WTC11 (cell line): ENCODE measurements at regions of chr14 and their contacts with region 1.

Region 1: DNA sequence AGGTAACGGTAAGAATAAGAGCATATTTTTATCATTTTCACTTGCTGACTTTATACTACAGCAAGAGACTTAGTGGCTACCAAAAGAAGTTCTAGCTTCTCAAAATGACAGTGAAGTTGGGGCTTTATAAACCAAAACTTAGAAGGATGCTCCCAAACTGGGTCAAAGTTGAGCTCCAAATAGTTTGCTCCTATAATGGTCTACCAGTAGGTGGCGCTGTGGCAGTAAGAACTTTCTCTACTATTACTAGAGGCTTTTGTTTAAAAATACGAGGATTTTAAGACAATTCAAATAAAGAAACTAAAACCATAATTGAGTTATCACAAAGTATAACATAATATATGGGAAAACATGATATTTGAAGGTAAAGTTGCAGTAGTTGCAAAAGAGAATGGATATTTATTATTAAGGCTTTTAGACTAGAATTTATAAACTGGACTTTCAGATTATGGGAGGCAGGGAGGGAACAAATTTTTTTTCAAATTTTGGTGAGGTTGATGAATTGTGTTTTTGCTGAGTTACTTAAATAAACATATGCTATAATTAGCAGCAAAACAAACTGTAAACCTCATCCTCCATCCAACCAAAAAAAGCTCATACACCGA is 75.0 kb downstream of the TGFB3 start:
- DNase-seq: peak; percentile 67
- ATAC-seq: peak; percentile 26; the same call in 1 of the 2 replicates
- H3K4me3 Mint-ChIP-seq: no peak overlapping the region
- H3K27ac Mint-ChIP-seq: no peak overlapping the region
- H3K4me1 Mint-ChIP-seq: peaks cover 9% of the 10 kb centered on the region
- H3K27me3 Mint-ChIP-seq: no peaks in the 10 kb centered on the region
- CTCF ChIP-seq: peak; percentile 71

Region 2: DNA sequence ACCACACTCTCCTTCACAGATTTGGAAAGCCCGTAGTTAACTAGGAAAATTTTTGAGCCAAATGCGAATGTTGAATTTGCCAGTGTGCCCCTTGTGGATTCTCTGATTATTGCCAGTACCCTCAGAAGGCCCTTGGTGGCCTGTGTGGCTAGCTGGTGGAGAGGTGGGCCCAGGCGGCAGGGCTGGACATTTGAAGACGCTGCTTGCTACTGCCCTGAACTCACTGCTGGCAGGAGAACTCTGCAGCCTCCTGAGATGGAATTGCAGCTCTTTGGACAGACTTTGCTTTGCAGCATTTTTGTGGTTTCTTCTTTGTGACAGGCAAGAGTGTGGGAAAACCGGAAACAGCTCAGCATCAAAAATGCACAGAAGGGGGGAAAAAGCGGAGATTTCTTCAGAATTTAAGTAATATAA is 22.6 kb before region 1 on chr14:
- CTCF ChIA-PET with region 1: interaction called, 12 read pairs
- POLR2A ChIA-PET with region 1: no interaction called
- DNase-seq: no peak
- ATAC-seq: peak; percentile 69
- H3K4me3 Mint-ChIP-seq: no peak overlapping the region
- H3K27ac Mint-ChIP-seq: 0 out of 2 replicates have a peak overlapping the region, but pooled peaks have one; percentile 35
- H3K4me1 Mint-ChIP-seq: peaks cover 21% of the 10 kb centered on the region
- H3K27me3 Mint-ChIP-seq: no peaks in the 10 kb centered on the region
- CTCF ChIP-seq: no peak

Region 3: GRCh38 chr14:75917322-75917945 is 10.7 kb after region 1 on chr14:
- CTCF ChIA-PET with region 1: interaction called, 42 read pairs
- POLR2A ChIA-PET with region 1: no interaction called
- DNase-seq: no peak
- ATAC-seq: peak; percentile 89
- H3K4me3 Mint-ChIP-seq: no peak overlapping the region
- H3K27ac Mint-ChIP-seq: peak overlapping the region; percentile 22; the same call in 1 of the 2 replicates
- H3K4me1 Mint-ChIP-seq: peaks cover 20% of the 10 kb centered on the region
- H3K27me3 Mint-ChIP-seq: no peaks in the 10 kb centered on the region; the same call in 1 of the 2 replicates
- CTCF ChIP-seq: no peak

Region 4: DNA sequence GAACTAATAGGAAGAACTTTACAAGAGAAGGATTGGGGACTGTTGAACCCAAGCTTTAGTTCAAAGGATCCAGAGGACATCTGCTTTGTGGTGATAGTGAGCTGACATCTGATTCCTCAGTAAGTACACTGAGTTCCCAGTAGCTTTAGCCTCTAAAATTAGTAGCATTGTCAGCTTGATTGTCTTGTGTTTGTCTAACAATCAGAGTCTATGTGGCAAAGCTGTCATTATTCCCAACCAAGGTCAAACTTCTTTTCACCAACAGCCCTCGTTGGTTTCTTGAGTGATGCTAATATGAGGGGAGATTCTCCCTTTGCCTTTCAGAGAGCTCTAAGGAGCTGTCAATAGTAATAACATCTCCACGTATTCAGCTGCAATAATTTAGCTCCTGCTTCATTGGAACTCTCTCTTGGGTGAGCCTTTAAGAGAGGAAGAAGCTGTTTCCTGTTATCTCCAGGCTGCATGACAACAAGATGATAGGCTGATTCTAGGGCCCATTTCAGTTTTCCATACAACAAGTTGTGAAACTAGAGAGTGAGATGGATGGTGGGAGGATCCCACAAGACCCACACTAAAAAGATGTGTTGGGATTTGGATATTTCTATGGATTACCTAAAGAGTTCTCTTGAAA is 28.3 kb after region 1 on chr14:
- CTCF ChIA-PET with region 1: interaction called, 13 read pairs
- POLR2A ChIA-PET with region 1: no interaction called
- DNase-seq: no peak
- ATAC-seq: no peak
- H3K4me3 Mint-ChIP-seq: no peak overlapping the region
- H3K27ac Mint-ChIP-seq: no peak overlapping the region
- H3K4me1 Mint-ChIP-seq: peaks cover 4% of the 10 kb centered on the region; the same call in 1 of the 2 replicates
- H3K27me3 Mint-ChIP-seq: no peaks in the 10 kb centered on the region
- CTCF ChIP-seq: no peak

Region 5: DNA sequence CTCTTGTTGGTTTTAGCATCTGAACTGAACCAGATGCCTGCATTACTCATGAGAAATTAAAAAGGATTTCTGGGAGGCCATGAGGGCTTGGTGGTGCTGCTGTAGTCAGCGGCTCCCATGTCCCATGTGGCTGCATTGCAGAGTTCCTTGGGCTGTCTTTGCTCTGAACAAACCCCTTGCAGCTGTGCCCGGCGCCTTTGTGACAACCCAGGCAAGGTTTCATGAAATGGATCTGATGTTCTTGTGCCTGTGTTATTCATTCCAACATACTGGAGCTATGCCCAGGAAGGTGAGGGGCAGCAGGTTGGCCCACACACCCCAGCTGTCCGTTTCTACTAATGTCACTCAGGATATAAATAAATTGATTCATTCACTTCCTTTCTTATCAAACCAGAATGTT is 34.3 kb after region 1 on chr14:
- CTCF ChIA-PET with region 1: interaction called, 11 read pairs
- POLR2A ChIA-PET with region 1: no interaction called
- DNase-seq: no peak
- ATAC-seq: no peak
- H3K4me3 Mint-ChIP-seq: no peak overlapping the region
- H3K27ac Mint-ChIP-seq: no peak overlapping the region; the same call in 1 of the 2 replicates
- H3K4me1 Mint-ChIP-seq: peaks cover 8% of the 10 kb centered on the region
- H3K27me3 Mint-ChIP-seq: no peaks in the 10 kb centered on the region
- CTCF ChIP-seq: no peak

Region 6: GRCh38 chr14:76012354-76012753 is 105.6 kb after region 1 on chr14:
- CTCF ChIA-PET with region 1: no interaction called
- POLR2A ChIA-PET with region 1: no interaction called
- DNase-seq: no peak
- ATAC-seq: peak; percentile 56
- H3K4me3 Mint-ChIP-seq: no peak overlapping the region
- H3K27ac Mint-ChIP-seq: no peak overlapping the region; the same call in 1 of the 2 replicates
- H3K4me1 Mint-ChIP-seq: peaks cover 22% of the 10 kb centered on the region
- H3K27me3 Mint-ChIP-seq: no peaks in the 10 kb centered on the region
- CTCF ChIP-seq: no peak